BJ (cell line): ENCODE measurements at regions of chr14 and their contacts with region 1.

Region 1: DNA sequence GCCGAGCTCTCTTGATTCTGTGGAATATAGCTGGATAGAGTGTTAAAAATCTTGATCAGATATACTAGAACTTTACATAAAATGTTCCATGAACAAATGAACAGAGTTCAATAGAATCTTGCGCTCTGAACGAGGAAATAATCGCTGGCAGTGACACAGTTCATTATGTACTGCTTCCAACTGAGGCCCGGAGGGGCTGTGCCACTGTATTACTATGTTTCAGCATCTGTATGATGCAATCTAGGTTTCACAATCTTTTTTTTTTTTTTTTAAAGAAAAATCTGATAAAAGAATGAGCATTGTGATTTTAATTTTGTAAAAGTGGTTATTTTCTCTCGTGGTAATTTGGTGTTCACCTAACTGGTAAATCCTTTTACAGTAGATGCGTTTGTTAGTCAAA is 77.2 kb downstream of the FERMT2 start:
- DNase-seq: no peak
- H3K4me3 ChIP-seq: no peak overlapping the region
- H3K27me3 ChIP-seq: no peaks in the 10 kb centered on the region
- CTCF ChIP-seq: no peak

Region 2: GRCh38 chr14:52695481-52696091 is 178.1 kb before region 1 on chr14 and contains the start of gene ERO1A:
- CTCF ChIA-PET with region 1: no interaction called
- POLR2A ChIA-PET with region 1: interaction called, 12 read pairs
- DNase-seq: no peak
- H3K4me3 ChIP-seq: peak within 1 kb of the TSS; percentile 100
- H3K27me3 ChIP-seq: no peaks in the 10 kb centered on the region
- CTCF ChIP-seq: no peak
- polyA plus RNA-seq, gene ERO1A: 21.0 and 34.2 TPM in 2 replicates

Region 3: DNA sequence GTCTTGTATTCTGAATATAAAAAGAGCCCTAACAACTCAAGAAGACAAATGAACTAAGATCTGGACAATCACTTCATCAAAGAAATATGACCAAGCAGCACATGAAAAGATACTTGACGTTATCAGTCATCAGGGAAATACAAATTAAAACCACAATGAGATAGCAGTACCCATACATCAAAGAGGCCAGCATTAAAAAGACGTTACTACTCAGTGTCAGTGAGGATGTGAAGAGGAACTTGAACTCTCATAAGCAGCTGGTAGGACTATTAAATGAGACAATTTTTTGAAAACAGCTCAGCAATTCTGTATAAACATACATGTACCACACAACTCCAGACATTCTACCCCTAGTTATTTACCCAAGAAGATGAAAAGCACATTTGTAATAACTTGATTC is 21.3 kb after region 1 on chr14:
- CTCF ChIA-PET with region 1: no interaction called
- POLR2A ChIA-PET with region 1: no interaction called
- DNase-seq: no peak
- H3K4me3 ChIP-seq: no peak overlapping the region
- H3K27me3 ChIP-seq: no peaks in the 10 kb centered on the region
- CTCF ChIP-seq: no peak

Region 4: DNA sequence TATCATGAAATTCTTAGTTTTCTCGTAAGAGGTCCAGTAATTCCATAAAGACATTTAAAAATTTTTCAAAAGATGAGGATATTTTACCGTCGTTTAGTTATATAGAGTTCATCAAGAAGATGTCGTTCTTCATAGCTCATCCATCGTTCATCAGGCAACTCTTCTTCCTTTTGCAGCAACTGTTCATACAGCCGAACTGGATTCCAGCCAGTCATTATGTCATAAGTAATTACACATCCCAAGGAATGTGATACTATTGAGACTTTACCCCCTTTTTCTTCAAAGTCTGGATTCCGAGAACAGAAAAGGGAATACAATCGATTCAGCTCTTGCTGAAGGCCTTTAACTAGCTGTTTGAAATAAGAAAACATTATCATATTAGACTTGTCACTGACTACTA is 189.2 kb after region 1 on chr14:
- CTCF ChIA-PET with region 1: no interaction called
- POLR2A ChIA-PET with region 1: no interaction called
- DNase-seq: no peak
- H3K4me3 ChIP-seq: no peak overlapping the region
- H3K27me3 ChIP-seq: no peaks in the 10 kb centered on the region
- CTCF ChIP-seq: no peak